Activated T-helper 1 cell treated with anti-CD3 and anti-CD28 coated beads, Interleukin-12 subunit alpha, Interleukin-12 subunit beta, Interleukin-2, Interleukin-4 antibody, amounts not matched to agents 30 ng/mL and 10 ng/mL and 1 ng/mL, durations not matched to agents 14 hours and 24 hours and 36 hours (primary cell): ENCODE measurements at regions of chr4 and their contacts with region 1.

Region 1: DNA sequence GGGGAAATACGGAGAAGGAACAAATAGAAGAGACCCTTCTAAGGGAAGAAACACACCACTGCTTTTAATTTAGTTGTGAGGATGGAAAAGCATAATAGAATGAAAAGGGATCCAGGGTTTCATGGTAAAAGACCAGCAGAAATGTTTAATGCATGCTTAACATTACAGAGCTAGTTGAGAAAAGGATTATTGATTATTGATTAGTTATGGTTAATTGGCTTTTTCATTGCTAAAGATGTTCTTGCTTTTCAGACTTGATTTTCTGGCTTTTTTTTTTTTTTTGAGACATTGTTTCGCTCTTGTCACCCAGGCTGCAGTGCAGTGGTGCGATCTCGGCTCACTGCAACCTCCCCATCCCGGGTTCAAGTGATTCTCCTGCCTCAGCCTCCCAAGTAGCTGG is 200.1 kb upstream of the ATOH1 start:
- DNase-seq: no peak
- H3K4me3 Mint-ChIP-seq: no peak overlapping the region
- H3K27ac Mint-ChIP-seq: no peak overlapping the region
- H3K4me1 Mint-ChIP-seq: no peaks in the 10 kb centered on the region
- H3K27me3 Mint-ChIP-seq: no peaks in the 10 kb centered on the region

Region 2: DNA sequence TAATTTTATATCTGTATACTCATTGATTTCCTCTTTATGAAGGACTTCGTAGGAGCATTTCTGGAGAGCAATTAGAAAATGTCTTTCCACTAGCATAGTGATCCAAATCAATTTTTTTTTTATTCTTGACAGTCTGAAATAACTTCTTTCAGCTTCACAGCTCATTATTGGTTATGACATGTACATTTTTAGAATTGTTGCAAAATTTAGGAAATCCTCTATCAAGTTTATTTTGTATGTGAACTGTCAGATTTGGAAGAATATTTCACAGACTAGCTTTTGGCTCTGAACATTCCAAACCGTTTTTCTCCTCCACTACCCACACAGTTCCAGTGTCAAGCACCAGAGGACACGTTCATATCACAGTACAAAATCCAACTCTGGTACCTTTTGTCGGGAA is 49.6 kb before region 1 on chr4:
- intact Hi-C with region 1: loop called (anchors 10 kb)
- DNase-seq: no peak
- H3K4me3 Mint-ChIP-seq: no peak overlapping the region
- H3K27ac Mint-ChIP-seq: no peak overlapping the region
- H3K4me1 Mint-ChIP-seq: no peaks in the 10 kb centered on the region
- H3K27me3 Mint-ChIP-seq: no peaks in the 10 kb centered on the region

Region 3: DNA sequence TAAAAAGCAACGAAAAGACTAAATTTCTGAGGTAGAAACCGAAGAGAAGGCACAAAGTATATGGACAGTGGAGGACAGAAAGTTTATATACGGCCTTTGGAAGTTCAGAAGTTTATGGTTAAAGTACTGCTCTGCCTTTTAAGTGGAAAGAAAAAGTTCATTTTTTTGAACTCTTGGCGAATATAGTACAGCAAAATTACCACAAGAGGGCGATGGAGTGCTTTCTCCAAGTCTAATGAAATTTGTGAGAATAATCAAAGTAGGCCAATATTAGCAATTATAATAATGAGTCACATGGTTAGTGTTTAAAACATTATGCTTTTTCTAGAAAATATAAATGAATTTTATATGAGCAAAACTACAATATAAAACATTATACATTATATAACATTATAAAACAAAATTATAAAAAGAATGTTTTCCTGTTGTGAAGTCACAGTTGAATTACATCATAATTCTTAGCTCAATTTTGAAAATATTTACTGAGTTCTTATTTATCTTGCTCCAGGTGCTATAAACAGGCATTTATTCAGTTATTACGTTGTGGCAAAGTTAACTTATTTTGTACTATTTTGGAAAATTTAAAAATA is 993.1 kb after region 1 on chr4:
- intact Hi-C with region 1: no loop called
- DNase-seq: no peak
- H3K4me3 Mint-ChIP-seq: no peak overlapping the region
- H3K27ac Mint-ChIP-seq: no peak overlapping the region
- H3K4me1 Mint-ChIP-seq: no peaks in the 10 kb centered on the region
- H3K27me3 Mint-ChIP-seq: no peaks in the 10 kb centered on the region